ENCODE measurements at regions of chr11 and their contacts with region 1.

Region 1: DNA sequence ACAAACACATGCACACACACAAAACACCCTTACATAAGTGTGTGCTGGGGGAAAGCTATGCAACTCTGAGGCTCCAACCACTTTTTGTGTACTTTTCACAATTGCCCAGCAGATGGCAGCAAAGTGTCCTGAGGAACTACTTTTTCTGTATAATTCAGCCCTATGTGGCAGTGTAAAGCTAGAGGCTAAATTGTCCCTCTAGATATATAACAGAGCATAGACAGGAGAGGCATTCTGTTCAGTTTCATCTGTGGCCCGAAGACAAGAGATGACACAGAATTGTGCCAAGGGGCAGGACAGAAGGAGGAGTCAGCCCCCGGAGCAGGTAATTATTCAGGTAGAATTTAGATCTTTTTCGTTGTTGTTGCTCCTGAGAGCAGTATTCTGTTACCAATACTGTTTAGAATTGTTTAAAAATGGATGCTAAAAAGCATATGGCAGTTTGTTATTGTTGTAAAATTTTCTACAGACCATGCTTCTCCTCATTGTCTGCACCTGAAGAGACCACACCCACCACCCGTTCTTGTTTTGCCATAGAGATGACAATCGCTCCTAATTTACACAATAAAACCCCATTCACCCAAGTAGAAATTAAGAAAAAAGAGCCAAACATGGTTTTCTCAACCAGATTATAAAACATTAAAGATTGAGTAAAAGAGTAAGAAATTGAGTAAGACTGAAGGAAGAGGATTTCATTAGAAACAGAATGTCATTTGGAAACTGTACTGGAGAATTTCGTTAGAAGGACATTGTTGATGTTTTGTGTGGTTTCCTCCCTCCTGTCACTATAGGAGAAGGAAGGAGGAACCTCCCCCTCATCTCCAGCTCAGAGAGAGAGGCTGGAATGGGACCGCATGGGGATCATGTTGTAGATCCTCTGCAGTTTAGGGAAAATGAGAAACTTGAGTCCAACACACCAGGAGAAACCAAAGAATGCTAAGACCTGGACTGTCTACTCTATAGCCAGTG is 14.5 kb upstream of the MS4A7 start:
- DNase-seq: peak; percentile 92
- ATAC-seq: peak; percentile 81
- H3K4me3 ChIP-seq: peak overlapping the region; percentile 37 to 72 (median 52)
- H3K4me3 Mint-ChIP-seq: peak overlapping the region; percentile 80
- H3K27ac ChIP-seq: peak overlapping the region; percentile 82 to 92
- H3K27ac Mint-ChIP-seq: peak overlapping the region; percentile 90
- H3K4me1 ChIP-seq: peaks cover 60 to 62% of the 10 kb centered on the region in 2 donors
- H3K4me1 Mint-ChIP-seq: peaks cover 71% of the 10 kb centered on the region
- H3K27me3 ChIP-seq: no peaks in the 10 kb centered on the region
- H3K27me3 Mint-ChIP-seq: no peaks in the 10 kb centered on the region
- CTCF ChIP-seq: peak; percentile 88

Region 2: GRCh38 chr11:60310407-60311279 is 53.2 kb before region 1 on chr11:
- CTCF ChIA-PET with region 1: no interaction called
- POLR2A ChIA-PET with region 1: no interaction called
- intact Hi-C with region 1: no loop called
- DNase-seq: peak; percentile 84
- ATAC-seq: peak; percentile 73
- H3K4me3 ChIP-seq: no peak overlapping the region
- H3K4me3 Mint-ChIP-seq: peak overlapping the region; percentile 27
- H3K27ac ChIP-seq: peak overlapping the region; percentile 21 to 61
- H3K27ac Mint-ChIP-seq: peak overlapping the region; percentile 73
- H3K4me1 ChIP-seq: peaks cover 8 to 9% of the 10 kb centered on the region in 2 donors
- H3K4me1 Mint-ChIP-seq: peaks cover 33% of the 10 kb centered on the region
- H3K27me3 ChIP-seq: no peaks in the 10 kb centered on the region
- H3K27me3 Mint-ChIP-seq: no peaks in the 10 kb centered on the region
- CTCF ChIP-seq: no peak

Region 3: GRCh38 chr11:60334005-60334620 is 29.7 kb before region 1 on chr11:
- CTCF ChIA-PET with region 1: interaction called, 31 read pairs
- POLR2A ChIA-PET with region 1: no interaction called
- intact Hi-C with region 1: no loop called
- DNase-seq: peak; percentile 85
- ATAC-seq: peak; percentile 96
- H3K4me3 ChIP-seq: no peak overlapping the region
- H3K4me3 Mint-ChIP-seq: no peak overlapping the region
- H3K27ac ChIP-seq: no peak overlapping the region
- H3K27ac Mint-ChIP-seq: no peak overlapping the region
- H3K4me1 ChIP-seq: peaks cover 9 to 12% of the 10 kb centered on the region in 2 donors
- H3K4me1 Mint-ChIP-seq: peaks cover 13% of the 10 kb centered on the region
- H3K27me3 ChIP-seq: no peaks in the 10 kb centered on the region
- H3K27me3 Mint-ChIP-seq: no peaks in the 10 kb centered on the region
- CTCF ChIP-seq: peak; percentile 91

Region 4: GRCh38 chr11:60396799-60397198 is 33.0 kb after region 1 on chr11:
- CTCF ChIA-PET with region 1: interaction called, 26 read pairs
- POLR2A ChIA-PET with region 1: interaction called, 5 read pairs
- intact Hi-C with region 1: loop called (anchors 1 kb)
- DNase-seq: peak; percentile 80
- ATAC-seq: peak; percentile 92
- H3K4me3 ChIP-seq: peak overlapping the region in 3 of 5 experiments; percentile 7 to 23 (median 16)
- H3K4me3 Mint-ChIP-seq: peak overlapping the region; percentile 70
- H3K27ac ChIP-seq: peak overlapping the region; percentile 74 to 79
- H3K27ac Mint-ChIP-seq: peak overlapping the region; percentile 86
- H3K4me1 ChIP-seq: peaks cover 32 to 41% of the 10 kb centered on the region in 2 donors
- H3K4me1 Mint-ChIP-seq: peaks cover 69% of the 10 kb centered on the region
- H3K27me3 ChIP-seq: no peaks in the 10 kb centered on the region
- H3K27me3 Mint-ChIP-seq: no peaks in the 10 kb centered on the region
- CTCF ChIP-seq: no peak

Region 5: GRCh38 chr11:60469723-60470122 is 105.9 kb after region 1 on chr11:
- CTCF ChIA-PET with region 1: interaction called, 40 read pairs
- POLR2A ChIA-PET with region 1: no interaction called
- intact Hi-C with region 1: no loop called
- DNase-seq: no peak
- ATAC-seq: no peak
- H3K4me3 ChIP-seq: no peak overlapping the region
- H3K4me3 Mint-ChIP-seq: no peak overlapping the region
- H3K27ac ChIP-seq: peak overlapping the region in 1 of 2 donors; percentile 93
- H3K27ac Mint-ChIP-seq: peak overlapping the region; percentile 54
- H3K4me1 ChIP-seq: peaks cover 10 to 24% of the 10 kb centered on the region in 2 donors
- H3K4me1 Mint-ChIP-seq: peaks cover 65% of the 10 kb centered on the region
- H3K27me3 ChIP-seq: no peaks in the 10 kb centered on the region
- H3K27me3 Mint-ChIP-seq: no peaks in the 10 kb centered on the region
- CTCF ChIP-seq: no peak

Region 6: GRCh38 chr11:60498853-60499252 is 135.0 kb after region 1 on chr11:
- CTCF ChIA-PET with region 1: interaction called, 11 read pairs
- POLR2A ChIA-PET with region 1: no interaction called
- intact Hi-C with region 1: no loop called
- DNase-seq: peak; percentile 81
- ATAC-seq: peak; percentile 96
- H3K4me3 ChIP-seq: peak overlapping the region in 2 of 5 experiments; percentile 4 to 26
- H3K4me3 Mint-ChIP-seq: peak overlapping the region; percentile 51
- H3K27ac ChIP-seq: peak overlapping the region; percentile 84 to 88
- H3K27ac Mint-ChIP-seq: peak overlapping the region; percentile 79
- H3K4me1 ChIP-seq: peaks cover 27 to 35% of the 10 kb centered on the region in 2 donors
- H3K4me1 Mint-ChIP-seq: peaks cover 26% of the 10 kb centered on the region
- H3K27me3 ChIP-seq: no peaks in the 10 kb centered on the region
- H3K27me3 Mint-ChIP-seq: no peaks in the 10 kb centered on the region
- CTCF ChIP-seq: no peak

Region 7: GRCh38 chr11:60625262-60625661 is 261.4 kb after region 1 on chr11:
- CTCF ChIA-PET with region 1: interaction called, 89 read pairs
- POLR2A ChIA-PET with region 1: no interaction called
- intact Hi-C with region 1: no loop called
- DNase-seq: no peak
- ATAC-seq: no peak
- H3K4me3 ChIP-seq: no peak overlapping the region
- H3K4me3 Mint-ChIP-seq: no peak overlapping the region
- H3K27ac ChIP-seq: no peak overlapping the region
- H3K27ac Mint-ChIP-seq: no peak overlapping the region
- H3K4me1 ChIP-seq: no peaks in the 10 kb centered on the region
- H3K4me1 Mint-ChIP-seq: peaks cover 7% of the 10 kb centered on the region
- H3K27me3 ChIP-seq: no peaks in the 10 kb centered on the region
- H3K27me3 Mint-ChIP-seq: no peaks in the 10 kb centered on the region
- CTCF ChIP-seq: no peak